ENCODE measurements at regions of chr17 and their contacts with region 1.

Region 1: GRCh38 chr17:40203131-40203530 is 16.0 kb upstream of the WIPF2 start:
- DNase-seq: no peak
- H3K4me3 ChIP-seq: no peak overlapping the region
- H3K27ac ChIP-seq: no peak overlapping the region
- H3K4me1 ChIP-seq: no peaks in the 10 kb centered on the region
- H3K27me3 ChIP-seq: no peaks in the 10 kb centered on the region
- CTCF ChIP-seq: no peak
- POLR2A ChIP-seq: no peak

Region 2: GRCh38 chr17:40287494-40288369 is 84.6 kb after region 1 on chr17 and contains the start of gene CDC6:
- intact Hi-C with region 1: loop called (anchors 2 kb)
- DNase-seq: peak; percentile 99
- H3K4me3 ChIP-seq: peak within 1 kb of the TSS; percentile 35 to 45
- H3K27ac ChIP-seq: peak within 1 kb of the TSS in 1 of 2 donors; percentile 5
- H3K4me1 ChIP-seq: peaks cover 4% of the 10 kb centered on the region
- H3K27me3 ChIP-seq: no peaks in the 10 kb centered on the region
- CTCF ChIP-seq: no peak
- POLR2A ChIP-seq: no peak
- total RNA-seq, gene CDC6: 2.1 to 10.3 TPM

Region 3: DNA sequence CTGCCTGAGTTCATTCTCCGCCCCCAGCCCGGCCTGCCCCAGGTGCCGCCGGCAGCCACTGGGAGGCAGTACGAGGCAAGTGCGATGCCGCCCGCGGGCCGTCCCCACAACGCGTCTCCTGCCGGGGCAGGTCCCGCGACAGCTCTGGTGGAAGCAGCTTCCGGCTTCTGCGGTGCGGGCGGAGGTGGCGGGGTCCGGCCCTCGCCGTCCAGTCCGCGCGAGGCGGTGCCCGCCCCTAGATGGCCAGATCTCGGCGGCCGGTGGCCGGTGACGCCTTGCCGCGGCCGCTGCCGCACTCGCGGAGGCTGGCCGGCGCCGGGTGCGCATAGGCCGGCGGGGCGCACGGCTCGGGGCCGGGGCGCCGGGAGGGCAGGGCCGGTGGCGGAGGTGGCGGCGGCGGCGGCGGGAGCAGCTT is 159.6 kb after region 1 on chr17:
- intact Hi-C with region 1: loop called (anchors 5 kb)
- DNase-seq: no peak
- H3K4me3 ChIP-seq: peak overlapping the region; percentile 38 to 42
- H3K27ac ChIP-seq: no peak overlapping the region
- H3K4me1 ChIP-seq: no peaks in the 10 kb centered on the region
- H3K27me3 ChIP-seq: no peaks in the 10 kb centered on the region
- CTCF ChIP-seq: peak in 2 of 4 experiments; percentile 52 to 80
- POLR2A ChIP-seq: no peak

Measured in prostate gland (tissue), 2 donors.